ENCODE measurements at regions of chr5 and their contacts with region 1.

Region 1: GRCh38 chr5:103475629-103476240 is 86.9 kb downstream of the NUDT12 start:
- DNase-seq: peak; percentile 37 to 68 (median 58)
- H3K4me3 ChIP-seq: no peak overlapping the region
- H3K27ac ChIP-seq: no peak overlapping the region
- H3K4me1 ChIP-seq: peaks cover 0 to 2% (median 0%) of the 10 kb centered on the region in 4 experiments
- H3K27me3 ChIP-seq: no peaks in the 10 kb centered on the region

Region 2: DNA sequence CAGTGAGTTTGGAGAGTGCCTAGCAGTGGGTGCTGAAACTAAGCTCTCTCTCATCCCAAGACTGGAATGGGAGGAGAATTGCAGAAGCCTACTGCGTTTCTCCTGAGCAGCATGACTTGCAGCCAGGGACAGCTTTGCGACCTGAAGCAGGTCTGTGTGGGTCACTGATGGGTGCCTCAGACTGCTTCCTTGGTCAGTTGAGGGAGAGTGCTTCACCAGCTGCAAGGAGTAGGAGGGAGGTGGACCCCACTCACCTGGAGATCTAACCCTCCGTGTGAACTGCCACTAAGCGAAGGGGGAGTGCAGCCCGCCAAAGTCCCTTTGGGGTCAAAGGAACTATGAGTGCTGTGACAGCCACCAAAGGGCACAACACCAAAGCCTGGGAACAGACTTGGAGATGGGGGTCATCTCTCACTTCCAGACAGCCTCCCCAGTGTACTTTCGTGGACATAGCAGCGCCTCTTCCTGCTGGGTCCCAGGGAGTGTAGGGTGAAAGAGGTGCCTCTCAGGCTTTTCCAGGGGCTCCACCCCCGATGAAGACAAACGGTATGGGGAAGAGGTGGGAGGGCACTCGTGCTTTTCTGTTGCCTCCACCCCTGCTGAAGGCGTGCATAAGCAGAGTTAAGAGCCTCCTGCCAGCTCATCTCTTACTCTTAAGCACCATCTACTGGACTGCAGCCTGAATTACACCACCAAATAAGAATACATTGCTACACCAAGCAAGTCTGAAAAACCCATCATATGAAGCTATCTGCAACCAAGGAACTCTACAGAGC is 251.4 kb before region 1 on chr5:
- CTCF ChIA-PET with region 1: interaction called, 20 read pairs
- POLR2A ChIA-PET with region 1: no interaction called
- DNase-seq: peak; percentile 71 to 92 (median 91)
- H3K4me3 ChIP-seq: peak overlapping the region in 2 of 7 experiments; percentile 28 to 46
- H3K27ac ChIP-seq: no peak overlapping the region
- H3K4me1 ChIP-seq: peaks cover 0 to 4% (median under 1%) of the 10 kb centered on the region in 4 experiments
- H3K27me3 ChIP-seq: no peaks in the 10 kb centered on the region

Region 3: GRCh38 chr5:103232393-103232999 is 243.2 kb before region 1 on chr5:
- CTCF ChIA-PET with region 1: interaction called, 76 read pairs
- POLR2A ChIA-PET with region 1: no interaction called
- DNase-seq: peak; percentile 54 to 74 (median 74)
- H3K4me3 ChIP-seq: no peak overlapping the region
- H3K27ac ChIP-seq: no peak overlapping the region
- H3K4me1 ChIP-seq: no peaks in the 10 kb centered on the region
- H3K27me3 ChIP-seq: no peaks in the 10 kb centered on the region

Region 4: DNA sequence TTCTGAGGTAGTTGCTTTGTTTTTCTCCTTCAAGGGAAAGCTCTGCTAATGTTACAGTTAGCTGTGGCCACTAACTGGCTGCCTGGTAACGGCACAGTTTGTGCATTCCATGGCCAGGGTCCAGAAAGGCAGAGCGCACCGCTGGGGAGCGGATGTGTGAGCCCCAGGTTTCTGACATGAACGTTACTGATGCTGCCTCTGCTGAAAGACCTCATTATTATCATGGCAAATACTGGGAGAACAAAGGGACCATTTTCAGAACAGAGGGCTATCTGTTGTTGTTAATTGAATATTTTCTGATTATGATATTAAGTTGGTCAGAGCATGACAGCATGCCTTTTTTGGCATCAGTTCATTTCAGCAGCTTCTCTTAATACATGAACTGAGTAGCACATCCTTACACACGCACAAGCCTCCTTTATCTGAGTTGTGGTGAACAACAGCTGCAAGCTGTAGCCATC is 47.3 kb before region 1 on chr5:
- CTCF ChIA-PET with region 1: no interaction called
- POLR2A ChIA-PET with region 1: no interaction called
- DNase-seq: no peak
- H3K4me3 ChIP-seq: no peak overlapping the region
- H3K27ac ChIP-seq: no peak overlapping the region
- H3K4me1 ChIP-seq: no peaks in the 10 kb centered on the region
- H3K27me3 ChIP-seq: no peaks in the 10 kb centered on the region

Region 5: DNA sequence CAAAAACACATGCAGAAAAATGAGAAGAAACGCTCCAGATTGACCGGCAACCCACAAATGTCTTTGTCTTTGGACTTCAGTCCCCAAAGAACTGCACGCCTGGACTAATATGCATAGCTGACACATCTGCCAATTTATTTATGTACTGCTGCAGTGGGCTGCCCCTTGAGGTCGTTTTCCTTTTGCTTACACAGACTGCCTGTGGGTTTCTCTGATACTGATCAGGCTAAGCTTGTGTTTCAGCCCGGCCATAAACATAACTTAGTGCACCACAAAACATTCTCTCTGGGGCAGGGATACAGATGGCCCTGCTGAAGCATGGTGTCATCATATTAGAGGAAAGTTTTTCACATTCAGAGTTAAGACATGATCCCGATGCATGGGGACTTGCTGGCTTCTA is 11.5 kb after region 1 on chr5:
- CTCF ChIA-PET with region 1: interaction called, 15 read pairs
- POLR2A ChIA-PET with region 1: no interaction called
- DNase-seq: peak in 2 of 3 donors; percentile 47 to 66
- H3K4me3 ChIP-seq: no peak overlapping the region
- H3K27ac ChIP-seq: no peak overlapping the region
- H3K4me1 ChIP-seq: peaks cover 0 to 9% (median 2%) of the 10 kb centered on the region in 4 experiments
- H3K27me3 ChIP-seq: no peaks in the 10 kb centered on the region

Region 6: DNA sequence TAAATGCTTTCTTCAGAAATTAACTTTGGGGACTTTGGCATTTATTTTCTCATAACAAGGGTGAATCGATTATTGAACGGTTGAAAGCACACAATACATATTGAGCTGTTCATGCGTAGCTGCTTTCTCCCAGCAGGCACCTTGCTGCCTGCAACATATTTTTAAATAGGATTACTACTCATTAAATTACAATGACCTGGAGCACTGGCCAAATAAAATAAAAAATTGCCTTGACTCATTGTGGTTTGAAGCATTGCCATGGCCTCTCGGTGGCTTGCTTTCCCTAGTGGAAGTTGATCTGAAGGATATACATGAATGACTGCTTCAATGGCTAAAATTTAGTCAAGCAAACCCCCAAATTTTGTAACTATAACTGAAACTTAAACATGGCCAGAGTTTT is 268.4 kb after region 1 on chr5:
- CTCF ChIA-PET with region 1: no interaction called
- POLR2A ChIA-PET with region 1: no interaction called
- DNase-seq: peak in 2 of 3 donors; percentile 14 to 19
- H3K4me3 ChIP-seq: no peak overlapping the region
- H3K27ac ChIP-seq: no peak overlapping the region
- H3K4me1 ChIP-seq: no peaks in the 10 kb centered on the region
- H3K27me3 ChIP-seq: no peaks in the 10 kb centered on the region

Measured in common myeloid progenitor, CD34-positive (primary cell).